Activated CD4-positive, alpha-beta memory T cell treated with anti-CD3 and anti-CD28 coated beads for 36 hours (primary cell): ENCODE measurements at regions of chr7 and their contacts with region 1.

Region 1: DNA sequence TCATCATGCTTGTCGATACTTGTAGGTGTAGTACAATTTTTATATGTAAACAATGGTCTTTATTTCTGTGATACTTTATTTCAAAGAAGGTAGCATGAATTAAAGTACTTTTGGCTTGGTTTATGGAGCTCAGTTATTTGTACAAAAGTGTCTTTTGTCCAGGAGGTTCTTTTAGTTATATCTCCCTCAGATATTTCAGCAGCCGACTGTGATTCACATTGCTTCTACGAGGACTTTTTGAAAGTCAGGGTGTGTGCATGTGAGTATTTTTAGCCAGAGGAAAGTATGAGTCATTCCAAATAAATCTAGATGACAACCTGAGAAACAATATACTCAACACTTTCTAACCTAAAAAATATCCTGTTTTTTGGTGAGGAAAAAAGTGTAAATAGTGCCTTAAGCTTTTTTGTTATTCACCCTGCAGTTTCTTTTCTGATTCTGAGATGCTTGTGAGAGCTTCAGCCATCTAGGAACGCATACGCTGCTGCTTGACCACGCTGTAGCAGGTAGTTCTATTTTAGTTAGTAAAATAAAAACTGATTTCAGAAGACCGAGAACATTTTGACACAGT is 595 bp upstream of the SUN1 start:
- DNase-seq: peak; percentile 36
- H3K4me3 Mint-ChIP-seq: peak overlapping the region; percentile 74
- H3K27ac Mint-ChIP-seq: peak overlapping the region; percentile 97
- H3K4me1 Mint-ChIP-seq: peaks cover 48% of the 10 kb centered on the region
- H3K27me3 Mint-ChIP-seq: no peaks in the 10 kb centered on the region

Region 2: DNA sequence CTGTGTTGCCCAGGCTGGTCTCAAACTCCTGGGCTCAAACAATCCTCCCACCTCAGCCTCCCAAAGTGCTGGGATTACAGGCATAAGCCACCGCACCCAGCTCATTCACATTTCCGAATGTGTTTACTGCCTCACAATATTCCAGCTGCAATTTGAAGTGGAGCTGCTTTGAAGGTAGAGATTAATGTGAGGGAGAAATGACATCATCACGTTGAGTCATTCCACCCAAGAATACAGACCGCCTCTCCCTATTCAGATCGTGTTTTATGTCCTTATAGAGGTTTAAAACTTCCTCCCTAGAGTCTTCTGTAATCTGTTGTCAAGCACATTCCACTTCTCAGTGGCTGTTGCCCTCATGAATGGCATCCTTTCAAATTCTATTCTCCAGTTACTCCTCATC is 211.6 kb before region 1 on chr7:
- CTCF ChIA-PET with region 1: no interaction called
- POLR2A ChIA-PET with region 1: no interaction called
- intact Hi-C with region 1: loop called (anchors 5 kb)
- DNase-seq: peak; percentile 29
- H3K4me3 Mint-ChIP-seq: no peak overlapping the region
- H3K27ac Mint-ChIP-seq: peak overlapping the region; percentile 97
- H3K4me1 Mint-ChIP-seq: peaks cover 43% of the 10 kb centered on the region
- H3K27me3 Mint-ChIP-seq: no peaks in the 10 kb centered on the region

Region 3: GRCh38 chr7:786472-787255 is 45.0 kb before region 1 on chr7:
- CTCF ChIA-PET with region 1: interaction called, 3 read pairs
- POLR2A ChIA-PET with region 1: no interaction called
- intact Hi-C with region 1: loop called (anchors 5 kb)
- DNase-seq: peak; percentile 80
- H3K4me3 Mint-ChIP-seq: no peak overlapping the region
- H3K27ac Mint-ChIP-seq: no peak overlapping the region
- H3K4me1 Mint-ChIP-seq: no peaks in the 10 kb centered on the region
- H3K27me3 Mint-ChIP-seq: no peaks in the 10 kb centered on the region

Region 4: DNA sequence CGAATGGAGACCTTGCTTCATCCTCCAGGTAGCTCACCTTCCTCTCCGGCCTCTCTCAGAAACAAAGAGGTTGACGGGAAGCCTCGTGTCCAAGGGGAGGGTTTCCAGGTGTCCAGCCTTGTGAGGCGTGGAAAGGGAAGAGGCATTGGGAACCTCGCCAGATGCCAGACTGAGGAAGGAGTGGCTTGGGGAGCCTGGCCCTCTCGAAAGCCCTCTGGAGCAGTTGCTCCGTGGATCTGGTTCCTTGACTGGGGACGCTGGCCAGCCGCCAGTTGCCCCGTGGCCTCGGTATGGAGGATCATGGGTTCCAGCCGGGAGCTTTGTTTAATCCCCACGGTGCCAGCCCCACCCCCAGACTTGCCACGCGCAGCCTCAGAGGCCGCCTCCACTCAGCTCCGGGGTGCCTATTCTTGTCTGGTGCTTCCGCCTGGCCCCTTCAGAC is 29.7 kb before region 1 on chr7:
- CTCF ChIA-PET with region 1: no interaction called
- POLR2A ChIA-PET with region 1: no interaction called
- intact Hi-C with region 1: no loop called
- DNase-seq: no peak
- H3K4me3 Mint-ChIP-seq: no peak overlapping the region
- H3K27ac Mint-ChIP-seq: no peak overlapping the region
- H3K4me1 Mint-ChIP-seq: no peaks in the 10 kb centered on the region
- H3K27me3 Mint-ChIP-seq: no peaks in the 10 kb centered on the region

Region 5: GRCh38 chr7:816300-816750 is 15.4 kb before region 1 on chr7:
- CTCF ChIA-PET with region 1: interaction called, 17 read pairs
- POLR2A ChIA-PET with region 1: interaction called, 19 read pairs
- intact Hi-C with region 1: loop called (anchors 1 kb)
- DNase-seq: peak; percentile 98
- H3K4me3 Mint-ChIP-seq: peak overlapping the region; percentile 71
- H3K27ac Mint-ChIP-seq: no peak overlapping the region
- H3K4me1 Mint-ChIP-seq: peaks cover 57% of the 10 kb centered on the region
- H3K27me3 Mint-ChIP-seq: peaks cover 9% of the 10 kb centered on the region